Mammary epithelial cell (primary cell): ENCODE measurements at regions of chr1 and their contacts with region 1.

Region 1: GRCh38 chr1:153572569-153573015 is 6.9 kb upstream of the S100A2 start:
- DNase-seq: peak; percentile 89
- H3K4me3 ChIP-seq: no peak overlapping the region
- H3K27ac ChIP-seq: peak overlapping the region; percentile 78
- H3K4me1 ChIP-seq: peaks cover 39% of the 10 kb centered on the region
- H3K27me3 ChIP-seq: no peaks in the 10 kb centered on the region
- CTCF ChIP-seq: peak; percentile 92 to 99

Region 2: GRCh38 chr1:153526132-153526543 is 46.5 kb before region 1 on chr1:
- CTCF ChIA-PET with region 1: interaction called, 4 read pairs
- dilution Hi-C with region 1: no loop called
- in situ Hi-C with region 1: loop called (anchors 5 kb)
- intact Hi-C with region 1: no loop called
- DNase-seq: peak; percentile 89
- H3K4me3 ChIP-seq: no peak overlapping the region
- H3K27ac ChIP-seq: peak overlapping the region; percentile 91
- H3K4me1 ChIP-seq: peaks cover 36% of the 10 kb centered on the region
- H3K27me3 ChIP-seq: no peaks in the 10 kb centered on the region
- CTCF ChIP-seq: no peak

Region 3: GRCh38 chr1:153545067-153546055 is 27.2 kb before region 1 on chr1 and contains the start of gene S100A4:
- CTCF ChIA-PET with region 1: no interaction called
- dilution Hi-C with region 1: no loop called
- in situ Hi-C with region 1: no loop called
- intact Hi-C with region 1: loop called (anchors 1 kb)
- DNase-seq: peak; percentile 92
- H3K4me3 ChIP-seq: no peak within 1 kb of the TSS
- H3K27ac ChIP-seq: peak within 1 kb of the TSS; percentile 53
- H3K4me1 ChIP-seq: peaks cover 70% of the 10 kb centered on the region
- H3K27me3 ChIP-seq: no peaks in the 10 kb centered on the region
- CTCF ChIP-seq: no peak
- total RNA-seq, gene S100A4: 4.3 to 9.9 TPM

Region 4: DNA sequence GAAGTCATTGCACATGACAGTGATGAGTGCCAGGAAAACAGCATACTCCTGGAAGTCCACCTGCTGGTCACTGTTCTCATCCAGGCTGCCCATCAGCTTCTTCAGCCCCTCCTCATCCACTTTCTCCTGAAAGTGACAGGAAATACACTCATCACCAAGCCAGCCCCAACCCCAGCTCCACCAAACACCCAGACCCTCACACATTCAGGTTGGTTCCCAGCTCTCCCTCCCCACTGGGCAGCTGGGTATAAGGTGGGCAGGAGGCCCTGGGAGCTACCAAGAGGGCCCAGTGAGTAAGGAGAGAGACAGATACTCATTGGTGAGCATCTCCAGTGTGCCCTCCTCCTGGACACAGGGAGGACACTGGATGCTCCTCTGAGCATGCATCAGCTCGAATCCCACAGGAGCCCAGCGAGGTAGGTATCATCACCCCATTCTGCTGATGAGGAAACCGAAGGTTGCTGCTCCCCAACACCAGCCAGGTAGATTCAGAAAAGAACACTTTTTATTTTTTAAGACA is 11.1 kb before region 1 on chr1:
- CTCF ChIA-PET with region 1: no interaction called
- dilution Hi-C with region 1: no loop called
- in situ Hi-C with region 1: no loop called
- intact Hi-C with region 1: no loop called
- DNase-seq: peak; percentile 75
- H3K4me3 ChIP-seq: peak overlapping the region in 1 of 3 experiments; percentile 89
- H3K27ac ChIP-seq: peak overlapping the region; percentile 100
- H3K4me1 ChIP-seq: peaks cover 10% of the 10 kb centered on the region
- H3K27me3 ChIP-seq: no peaks in the 10 kb centered on the region
- CTCF ChIP-seq: peak in 1 of 2 donors; percentile 14

Region 5: GRCh38 chr1:153617675-153618074 is 45.1 kb after region 1 on chr1:
- CTCF ChIA-PET with region 1: interaction called, 6 read pairs
- dilution Hi-C with region 1: no loop called
- in situ Hi-C with region 1: no loop called
- intact Hi-C with region 1: loop called (anchors 1 kb)
- DNase-seq: peak; percentile 71
- H3K4me3 ChIP-seq: no peak overlapping the region
- H3K27ac ChIP-seq: peak overlapping the region; percentile 57
- H3K4me1 ChIP-seq: peaks cover 33% of the 10 kb centered on the region
- H3K27me3 ChIP-seq: no peaks in the 10 kb centered on the region
- CTCF ChIP-seq: peak; percentile 33 to 67

Region 6: DNA sequence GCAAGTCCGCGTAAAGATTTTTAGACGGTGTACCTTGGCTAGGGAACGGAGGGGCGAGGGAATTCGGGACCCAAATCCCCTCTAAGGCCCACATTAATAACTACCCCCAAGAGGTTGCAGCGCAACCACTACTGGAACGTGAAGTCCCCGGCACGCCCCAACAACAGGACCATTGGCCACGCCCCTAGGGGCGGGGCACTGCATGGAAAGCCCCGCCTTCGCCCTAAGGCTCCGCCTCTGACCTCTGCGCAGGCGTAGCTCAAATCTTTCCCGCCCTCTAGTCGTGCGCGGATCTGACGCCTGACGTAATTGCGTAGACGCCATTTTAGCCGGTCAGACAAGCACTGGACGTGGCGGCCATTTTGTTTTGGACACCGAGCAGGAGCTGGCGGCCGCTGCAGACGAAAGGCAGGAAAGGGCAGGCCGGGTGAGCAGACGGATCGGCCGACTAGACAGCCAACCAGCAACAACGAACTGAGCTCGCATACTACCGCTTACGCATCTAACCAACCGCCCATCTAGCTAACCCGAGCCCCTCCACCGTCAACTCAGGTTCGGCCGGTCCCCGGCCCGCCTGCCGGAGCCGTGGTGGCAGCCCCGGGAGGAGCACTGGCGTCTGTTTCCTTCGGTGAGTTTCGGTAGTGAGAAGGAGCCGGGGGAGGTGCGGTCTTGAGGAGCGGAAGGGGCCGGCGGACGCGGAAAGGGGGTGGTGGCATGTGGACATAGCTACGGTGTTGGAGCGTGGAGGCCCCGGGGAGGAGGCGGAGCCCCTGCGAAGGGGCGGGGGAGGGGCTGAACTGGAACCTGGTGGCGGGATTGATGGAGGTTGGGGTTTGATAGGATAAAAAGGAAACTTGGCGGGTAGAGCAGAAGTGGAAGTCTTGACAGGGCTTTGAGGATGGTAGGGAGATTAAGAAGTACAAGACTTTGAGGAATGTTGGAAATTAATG is 61.4 kb after region 1 on chr1 and contains the start of gene CHTOP:
- CTCF ChIA-PET with region 1: no interaction called
- dilution Hi-C with region 1: no loop called
- in situ Hi-C with region 1: loop called in 1 of 2 experiments (anchors 5 kb)
- intact Hi-C with region 1: loop called (anchors 1 kb)
- DNase-seq: peak; percentile 96
- H3K4me3 ChIP-seq: peak within 1 kb of the TSS; percentile 74 to 100 (median 90)
- H3K27ac ChIP-seq: peak within 1 kb of the TSS; percentile 97
- H3K4me1 ChIP-seq: peaks cover 9% of the 10 kb centered on the region
- H3K27me3 ChIP-seq: no peaks in the 10 kb centered on the region
- CTCF ChIP-seq: no peak
- total RNA-seq, gene CHTOP: 36.0 to 64.5 TPM

Region 7: GRCh38 chr1:153670859-153671627 is 98.5 kb after region 1 on chr1 and contains the start of gene ILF2:
- CTCF ChIA-PET with region 1: interaction called, 3 read pairs
- dilution Hi-C with region 1: no loop called
- in situ Hi-C with region 1: no loop called
- intact Hi-C with region 1: loop called (anchors 1 kb)
- DNase-seq: peak; percentile 99
- H3K4me3 ChIP-seq: peak within 1 kb of the TSS; percentile 66 to 96 (median 82)
- H3K27ac ChIP-seq: peak within 1 kb of the TSS; percentile 81
- H3K4me1 ChIP-seq: peaks cover 15% of the 10 kb centered on the region
- H3K27me3 ChIP-seq: no peaks in the 10 kb centered on the region
- CTCF ChIP-seq: peak in 1 of 2 donors; percentile 35
- total RNA-seq, gene ILF2: 151 to 158 TPM